Caki2 (cell line): ENCODE measurements at regions of chr21 and their contacts with region 1.

Region 1: GRCh38 chr21:39612233-39613040 is at the start of gene B3GALT5:
- DNase-seq: peak; percentile 44
- total RNA-seq, gene B3GALT5: 12.1 and 25.4 TPM in 2 replicates

Region 2: DNA sequence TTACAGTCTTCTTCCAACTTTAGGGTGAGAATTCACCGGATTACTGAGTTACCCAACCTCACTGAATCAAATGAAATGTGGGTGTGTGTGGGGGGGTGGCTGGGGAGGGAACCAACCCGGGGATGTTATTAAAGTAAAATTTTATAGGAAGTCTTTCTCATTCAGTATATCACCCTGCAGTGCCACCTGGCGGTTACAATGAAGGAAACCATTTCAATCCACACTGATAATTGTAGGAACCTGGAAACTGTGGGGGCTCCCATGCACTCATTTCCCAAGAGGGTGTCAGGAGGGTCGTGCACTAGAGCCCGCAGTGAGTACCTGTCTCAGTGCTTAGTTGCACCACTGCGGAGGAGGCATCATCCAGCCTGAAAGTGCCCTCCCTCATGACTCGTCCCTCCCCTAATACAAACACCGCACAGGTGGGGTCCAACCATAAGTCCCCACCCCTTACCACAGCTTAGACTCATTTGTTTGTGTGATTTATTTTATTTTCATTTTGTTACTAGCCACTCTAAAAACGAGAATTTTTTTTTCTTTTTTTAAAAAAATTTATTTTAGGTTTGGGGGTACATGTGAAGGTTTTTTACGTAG is 103.5 kb after region 1 on chr21:
- in situ Hi-C with region 1: loop called (anchors 25 kb)
- DNase-seq: peak; percentile 33